ENCODE measurements at regions of chr9 and their contacts with region 1.

Region 1: DNA sequence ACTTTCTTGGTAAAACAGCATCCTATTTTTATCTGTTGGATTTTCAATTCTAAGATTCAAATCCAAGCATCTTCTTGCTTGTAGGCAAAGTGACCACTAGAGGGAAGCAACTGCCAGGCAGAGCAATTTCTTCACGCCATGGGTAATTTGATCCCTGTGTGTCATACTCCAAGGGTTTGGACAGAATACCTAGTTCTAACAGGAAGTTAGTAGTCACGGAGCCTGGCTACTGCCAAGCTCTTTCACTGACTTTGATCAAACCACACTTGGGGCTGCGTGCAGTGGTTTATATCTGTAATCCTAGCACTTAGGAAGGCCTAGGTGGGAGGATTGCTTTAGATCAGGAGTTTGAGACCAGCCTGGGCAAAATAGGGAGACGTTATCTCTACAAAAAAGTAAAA is 473.6 kb upstream of the TNC start:
- DNase-seq: peak; percentile 55
- H3K4me3 ChIP-seq: no peak overlapping the region
- H3K27ac ChIP-seq: no peak overlapping the region
- H3K4me1 ChIP-seq: no peaks in the 10 kb centered on the region
- H3K27me3 ChIP-seq: no peaks in the 10 kb centered on the region
- CTCF ChIP-seq: peak; percentile 60 to 71 (median 61)
- POLR2A ChIP-seq: no peak

Region 2: GRCh38 chr9:116656501-116656971 is 1065.0 kb after region 1 on chr9:
- intact Hi-C with region 1: loop called (anchors 10 kb)
- DNase-seq: no peak
- H3K4me3 ChIP-seq: no peak overlapping the region
- H3K27ac ChIP-seq: peak overlapping the region in 1 of 2 donors; percentile 20
- H3K4me1 ChIP-seq: peaks cover 7% of the 10 kb centered on the region
- H3K27me3 ChIP-seq: no peaks in the 10 kb centered on the region
- CTCF ChIP-seq: no peak
- POLR2A ChIP-seq: no peak